Activated CD8-positive, alpha-beta T cell treated with anti-CD3 and anti-CD28 coated beads for 36 hours (primary cell): ENCODE measurements at regions of chr13 and their contacts with region 1.

Region 1: DNA sequence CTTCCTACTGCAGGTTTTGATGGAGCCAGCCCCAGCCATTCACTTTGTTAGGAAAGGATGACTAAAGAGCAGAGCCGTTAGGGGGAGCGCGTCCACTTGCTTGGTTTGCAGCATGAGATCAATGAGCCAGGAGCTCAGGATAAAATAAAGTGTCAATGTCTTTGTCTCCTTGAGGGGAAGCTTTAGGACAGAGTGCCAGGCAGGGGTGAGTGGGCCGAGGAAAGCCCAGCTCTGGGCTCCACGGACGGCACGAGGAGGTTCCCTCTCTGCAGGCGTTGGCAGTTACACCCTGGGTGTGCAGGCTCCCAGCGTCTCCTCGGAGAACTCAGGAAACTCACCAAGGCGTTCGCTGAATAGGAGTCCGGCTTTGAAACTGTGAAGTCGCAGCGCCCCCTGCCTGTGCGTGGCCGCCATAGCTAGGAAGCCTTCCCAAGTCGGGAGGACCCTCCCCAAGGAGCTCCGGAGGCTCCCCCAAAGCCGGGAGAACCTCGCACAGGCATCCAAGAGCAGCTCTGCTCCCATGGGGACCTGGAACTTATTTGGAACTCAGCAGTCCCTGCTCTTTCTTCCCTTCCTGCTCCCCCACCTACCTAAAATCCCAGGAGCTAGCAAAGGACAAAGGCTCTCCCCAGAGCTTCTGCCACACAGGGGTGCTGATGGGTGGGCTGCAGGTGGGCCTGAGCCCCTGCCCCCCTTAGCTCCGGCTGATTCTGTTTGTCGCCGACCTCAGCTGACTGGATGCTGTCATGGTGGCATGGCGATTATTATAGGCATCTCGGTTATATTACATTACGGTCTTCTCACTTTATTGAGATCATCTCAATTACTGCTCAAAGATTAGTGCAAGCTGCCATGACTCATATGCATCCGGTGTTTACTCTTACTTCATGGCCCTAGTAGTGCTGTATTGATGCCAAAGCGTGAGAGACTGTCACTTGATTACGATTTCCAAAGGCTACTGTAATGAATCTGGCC is 34.4 kb downstream of the GSX1 start:
- DNase-seq: peak; percentile 77
- ATAC-seq: peak; percentile 65
- H3K4me3 Mint-ChIP-seq: no peak overlapping the region
- H3K27ac Mint-ChIP-seq: no peak overlapping the region
- H3K4me1 Mint-ChIP-seq: peaks cover 8% of the 10 kb centered on the region
- H3K27me3 Mint-ChIP-seq: peaks cover 69% of the 10 kb centered on the region
- CTCF ChIP-seq: peak; percentile 97

Region 2: GRCh38 chr13:26985285-26985878 is 841.3 kb before region 1 on chr13:
- CTCF ChIA-PET with region 1: interaction called, 15 read pairs
- POLR2A ChIA-PET with region 1: no interaction called
- intact Hi-C with region 1: no loop called
- DNase-seq: peak; percentile 86
- ATAC-seq: peak; percentile 90
- H3K4me3 Mint-ChIP-seq: no peak overlapping the region
- H3K27ac Mint-ChIP-seq: no peak overlapping the region
- H3K4me1 Mint-ChIP-seq: no peaks in the 10 kb centered on the region
- H3K27me3 Mint-ChIP-seq: peaks cover 11% of the 10 kb centered on the region
- CTCF ChIP-seq: peak; percentile 76

Region 3: GRCh38 chr13:27406178-27406939 is 420.3 kb before region 1 on chr13:
- CTCF ChIA-PET with region 1: interaction called, 13 read pairs
- POLR2A ChIA-PET with region 1: no interaction called
- intact Hi-C with region 1: no loop called
- DNase-seq: peak; percentile 44
- ATAC-seq: peak; percentile 74
- H3K4me3 Mint-ChIP-seq: no peak overlapping the region
- H3K27ac Mint-ChIP-seq: no peak overlapping the region
- H3K4me1 Mint-ChIP-seq: peaks cover 6% of the 10 kb centered on the region
- H3K27me3 Mint-ChIP-seq: peaks cover 3% of the 10 kb centered on the region
- CTCF ChIP-seq: peak; percentile 49

Region 4: GRCh38 chr13:27419328-27419727 is 407.3 kb before region 1 on chr13:
- CTCF ChIA-PET with region 1: no interaction called
- POLR2A ChIA-PET with region 1: no interaction called
- intact Hi-C with region 1: no loop called
- DNase-seq: no peak
- ATAC-seq: no peak
- H3K4me3 Mint-ChIP-seq: no peak overlapping the region
- H3K27ac Mint-ChIP-seq: no peak overlapping the region
- H3K4me1 Mint-ChIP-seq: peaks cover 9% of the 10 kb centered on the region
- H3K27me3 Mint-ChIP-seq: no peaks in the 10 kb centered on the region
- CTCF ChIP-seq: no peak

Region 5: GRCh38 chr13:27792393-27793218 is 34.1 kb before region 1 on chr13 and contains the start of gene GSX1:
- CTCF ChIA-PET with region 1: interaction called, 25 read pairs
- POLR2A ChIA-PET with region 1: no interaction called
- intact Hi-C with region 1: no loop called
- DNase-seq: peak; percentile 73
- ATAC-seq: peak; percentile 78
- H3K4me3 Mint-ChIP-seq: peak within 1 kb of the TSS; percentile 72
- H3K27ac Mint-ChIP-seq: no peak within 1 kb of the TSS
- H3K4me1 Mint-ChIP-seq: peaks cover 32% of the 10 kb centered on the region
- H3K27me3 Mint-ChIP-seq: peaks cover 79% of the 10 kb centered on the region
- CTCF ChIP-seq: no peak
- total RNA-seq, gene GSX1: not detected

Region 6: GRCh38 chr13:27868641-27869435 is 42.2 kb after region 1 on chr13:
- CTCF ChIA-PET with region 1: interaction called, 10 read pairs
- POLR2A ChIA-PET with region 1: no interaction called
- intact Hi-C with region 1: no loop called
- DNase-seq: no peak
- ATAC-seq: no peak
- H3K4me3 Mint-ChIP-seq: no peak overlapping the region
- H3K27ac Mint-ChIP-seq: no peak overlapping the region
- H3K4me1 Mint-ChIP-seq: no peaks in the 10 kb centered on the region
- H3K27me3 Mint-ChIP-seq: peaks cover 22% of the 10 kb centered on the region
- CTCF ChIP-seq: peak; percentile 74

Region 7: DNA sequence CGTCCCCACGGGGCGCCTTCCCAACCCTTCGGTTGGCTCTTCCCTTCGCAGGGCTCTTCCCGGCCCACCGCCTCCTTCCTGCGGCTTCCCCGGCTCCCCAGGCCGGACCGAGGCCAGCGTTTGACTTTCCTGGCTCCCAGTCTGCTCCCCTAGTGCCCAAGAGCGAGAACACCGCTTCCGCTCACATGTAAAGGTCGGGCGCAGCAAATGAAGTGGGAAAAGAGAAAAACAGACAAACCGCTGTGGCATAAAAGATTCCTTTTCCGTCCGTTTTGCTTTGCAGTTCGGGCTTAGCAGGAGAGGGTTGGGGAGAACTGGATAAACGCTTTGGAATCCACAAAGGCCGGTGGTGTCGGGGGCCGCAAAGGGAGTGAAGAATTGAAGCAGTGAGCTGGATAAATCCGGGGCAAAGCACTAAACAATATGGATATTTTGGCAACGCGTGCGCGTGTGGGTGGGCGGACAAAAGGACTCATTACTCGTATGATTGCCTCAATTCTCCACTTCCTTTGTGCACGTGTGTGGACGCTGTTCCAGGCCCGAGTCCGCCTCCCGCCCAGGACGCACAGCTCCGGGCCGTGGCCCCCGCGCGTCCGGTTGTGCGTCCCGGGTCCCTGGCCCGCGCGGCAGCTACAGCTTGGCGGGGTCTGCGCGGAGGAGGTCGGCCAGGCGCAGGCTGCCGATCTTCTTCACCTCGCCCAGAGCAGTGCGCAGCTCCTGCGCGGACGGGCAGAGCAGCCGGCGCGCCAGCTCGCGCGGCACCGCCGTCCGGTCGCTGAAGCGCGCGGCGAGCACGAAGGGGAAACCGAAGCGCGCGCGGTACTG is 151.0 kb after region 1 on chr13:
- CTCF ChIA-PET with region 1: interaction called, 187 read pairs
- POLR2A ChIA-PET with region 1: no interaction called
- intact Hi-C with region 1: no loop called
- DNase-seq: no peak
- ATAC-seq: no peak
- H3K4me3 Mint-ChIP-seq: peak overlapping the region; percentile 29
- H3K27ac Mint-ChIP-seq: no peak overlapping the region
- H3K4me1 Mint-ChIP-seq: peaks cover 12% of the 10 kb centered on the region
- H3K27me3 Mint-ChIP-seq: peaks cover 84% of the 10 kb centered on the region
- CTCF ChIP-seq: no peak